ENCODE measurements at regions of chr17 and their contacts with region 1.

Region 1: DNA sequence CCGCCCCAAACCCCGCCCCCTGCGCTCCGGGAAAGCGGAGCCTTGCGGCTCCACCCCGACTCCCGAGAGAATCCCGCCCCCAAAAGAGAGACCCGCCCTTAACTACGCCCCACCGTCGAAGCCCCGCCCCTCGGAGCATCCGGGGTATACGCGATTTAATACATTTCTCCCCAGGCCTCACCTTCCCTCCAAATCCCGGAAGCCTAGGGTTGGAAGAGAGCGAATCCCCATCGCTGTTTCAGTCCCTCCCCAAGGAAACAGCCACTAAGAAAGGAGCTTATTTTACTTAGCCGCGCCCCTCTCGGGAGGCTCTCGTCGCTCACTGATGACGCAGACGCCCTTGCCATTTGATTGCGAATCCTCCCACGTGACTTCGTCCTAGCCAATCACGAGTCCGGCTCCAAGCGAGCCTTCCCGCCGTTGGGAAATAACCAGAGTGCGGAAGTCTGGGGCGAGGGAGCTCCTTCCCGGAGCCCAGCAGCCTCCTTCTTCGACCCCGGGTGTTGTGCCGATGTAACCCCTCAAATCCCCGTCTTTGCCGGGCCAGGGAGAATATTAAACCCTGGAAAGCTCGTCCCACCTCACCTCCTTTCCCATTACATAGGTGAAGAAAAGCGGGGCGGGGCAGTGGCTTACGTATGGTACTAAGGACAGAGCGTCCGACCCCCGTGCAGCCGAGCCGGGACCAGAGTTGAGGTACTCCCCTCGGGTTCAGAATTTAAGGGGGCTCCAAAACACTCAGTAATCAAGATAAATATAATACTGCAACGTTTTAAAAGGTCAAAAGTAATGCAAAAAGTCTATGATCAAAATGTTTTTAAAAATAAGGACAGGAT is 462 bp upstream of the FDXR start:
- DNase-seq: peak; percentile 94
- ATAC-seq: peak; percentile 93
- H3K4me3 Mint-ChIP-seq: peak overlapping the region; percentile 94
- H3K27ac Mint-ChIP-seq: peak overlapping the region; percentile 94
- H3K4me1 Mint-ChIP-seq: peaks cover 22% of the 10 kb centered on the region
- H3K27me3 Mint-ChIP-seq: no peaks in the 10 kb centered on the region
- CTCF ChIP-seq: no peak

Region 2: DNA sequence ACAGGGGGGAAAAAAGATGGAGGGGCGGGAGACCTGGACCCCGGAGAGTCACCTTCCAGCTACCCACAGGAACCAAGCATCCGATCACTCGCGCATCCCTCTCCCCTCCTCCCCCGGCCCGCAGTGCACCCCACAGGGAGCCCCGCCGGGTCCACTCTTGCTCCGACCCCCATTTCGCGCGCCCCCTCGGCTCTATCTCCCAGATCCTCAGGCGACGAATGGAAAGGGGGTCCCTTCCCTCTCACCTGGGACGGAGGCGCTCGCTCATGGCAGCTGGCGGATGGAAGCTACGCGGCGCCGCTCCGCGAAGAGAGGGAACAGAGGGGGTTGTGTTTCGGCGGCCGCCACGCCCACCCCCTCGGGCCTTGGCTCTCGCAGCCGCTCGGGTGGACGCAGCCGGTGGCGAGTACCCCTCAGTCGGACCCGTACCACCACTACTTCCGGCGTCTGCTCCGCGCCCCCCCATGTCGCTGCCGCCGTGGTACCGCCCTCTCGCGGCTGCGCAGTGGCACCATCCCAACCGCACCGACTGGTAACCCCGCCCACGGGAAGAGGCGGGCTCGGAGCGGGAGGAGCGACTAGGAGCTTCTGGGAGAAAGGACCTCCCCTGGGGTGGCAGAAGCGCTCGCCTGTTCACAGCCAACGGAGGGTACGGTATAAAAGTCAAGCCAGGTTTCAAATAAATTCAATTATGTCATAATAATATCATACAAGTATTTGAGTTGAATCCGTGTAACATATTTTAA is 1641.2 kb before region 1 on chr17:
- CTCF ChIA-PET with region 1: no interaction called
- POLR2A ChIA-PET with region 1: interaction called, 10 read pairs
- intact Hi-C with region 1: no loop called
- DNase-seq: peak; percentile 97
- ATAC-seq: peak; percentile 95
- H3K4me3 Mint-ChIP-seq: peak overlapping the region; percentile 93
- H3K27ac Mint-ChIP-seq: peak overlapping the region; percentile 97
- H3K4me1 Mint-ChIP-seq: peaks cover 54% of the 10 kb centered on the region
- H3K27me3 Mint-ChIP-seq: no peaks in the 10 kb centered on the region
- CTCF ChIP-seq: no peak

Region 3: GRCh38 chr17:74579900-74580299 is 293.4 kb before region 1 on chr17:
- CTCF ChIA-PET with region 1: no interaction called
- POLR2A ChIA-PET with region 1: no interaction called
- intact Hi-C with region 1: no loop called
- DNase-seq: no peak
- ATAC-seq: no peak
- H3K4me3 Mint-ChIP-seq: no peak overlapping the region
- H3K27ac Mint-ChIP-seq: no peak overlapping the region
- H3K4me1 Mint-ChIP-seq: peaks cover 3% of the 10 kb centered on the region
- H3K27me3 Mint-ChIP-seq: peaks cover 4% of the 10 kb centered on the region
- CTCF ChIP-seq: no peak

Region 4: DNA sequence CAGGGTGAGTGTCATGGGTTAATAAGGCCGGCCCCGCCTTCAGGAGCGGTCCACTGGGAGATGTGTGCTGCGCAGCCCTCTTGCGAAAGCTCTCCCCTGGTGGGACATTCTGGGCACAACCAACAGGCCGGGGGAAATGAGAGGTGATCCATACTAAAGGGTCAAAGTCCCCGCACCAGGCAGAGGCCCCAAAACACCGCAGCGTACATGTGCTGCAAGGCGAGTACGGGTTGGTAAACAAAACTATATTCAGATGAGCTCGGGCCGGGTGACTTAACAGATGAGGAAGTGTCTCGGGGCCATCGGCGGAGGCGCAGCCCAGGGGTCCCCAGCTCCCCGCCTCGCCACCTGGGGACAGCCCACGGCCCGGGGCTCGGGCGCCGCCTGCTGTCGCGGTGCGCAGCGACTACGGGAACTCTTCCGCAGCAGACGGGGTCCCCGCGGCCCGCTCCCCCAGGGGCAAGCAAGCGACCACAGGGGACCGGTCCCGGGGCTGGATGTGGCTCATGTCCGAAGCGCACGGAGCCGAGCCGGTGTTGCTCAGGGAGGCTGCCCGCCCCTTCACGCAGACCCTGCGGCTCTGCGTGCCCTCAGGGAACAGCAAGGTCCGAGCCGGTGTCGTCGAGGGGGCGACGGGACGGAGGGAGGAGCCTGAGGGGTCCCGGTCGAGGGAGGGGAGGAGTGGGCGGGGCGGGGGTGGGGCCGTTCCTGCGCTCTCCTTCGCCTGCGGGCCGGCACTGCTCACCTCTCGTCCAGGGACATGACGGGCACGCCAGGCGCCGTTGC is 136.6 kb before region 1 on chr17 and contains the start of gene RAB37:
- CTCF ChIA-PET with region 1: no interaction called
- POLR2A ChIA-PET with region 1: interaction called, 17 read pairs
- intact Hi-C with region 1: no loop called
- DNase-seq: peak; percentile 74
- ATAC-seq: peak; percentile 73
- H3K4me3 Mint-ChIP-seq: peak within 1 kb of the TSS; percentile 85
- H3K27ac Mint-ChIP-seq: peak within 1 kb of the TSS; percentile 88
- H3K4me1 Mint-ChIP-seq: peaks cover 49% of the 10 kb centered on the region
- H3K27me3 Mint-ChIP-seq: no peaks in the 10 kb centered on the region
- CTCF ChIP-seq: no peak
- total RNA-seq, gene RAB37: 11.0 and 11.1 TPM in 2 replicates

Region 5: DNA sequence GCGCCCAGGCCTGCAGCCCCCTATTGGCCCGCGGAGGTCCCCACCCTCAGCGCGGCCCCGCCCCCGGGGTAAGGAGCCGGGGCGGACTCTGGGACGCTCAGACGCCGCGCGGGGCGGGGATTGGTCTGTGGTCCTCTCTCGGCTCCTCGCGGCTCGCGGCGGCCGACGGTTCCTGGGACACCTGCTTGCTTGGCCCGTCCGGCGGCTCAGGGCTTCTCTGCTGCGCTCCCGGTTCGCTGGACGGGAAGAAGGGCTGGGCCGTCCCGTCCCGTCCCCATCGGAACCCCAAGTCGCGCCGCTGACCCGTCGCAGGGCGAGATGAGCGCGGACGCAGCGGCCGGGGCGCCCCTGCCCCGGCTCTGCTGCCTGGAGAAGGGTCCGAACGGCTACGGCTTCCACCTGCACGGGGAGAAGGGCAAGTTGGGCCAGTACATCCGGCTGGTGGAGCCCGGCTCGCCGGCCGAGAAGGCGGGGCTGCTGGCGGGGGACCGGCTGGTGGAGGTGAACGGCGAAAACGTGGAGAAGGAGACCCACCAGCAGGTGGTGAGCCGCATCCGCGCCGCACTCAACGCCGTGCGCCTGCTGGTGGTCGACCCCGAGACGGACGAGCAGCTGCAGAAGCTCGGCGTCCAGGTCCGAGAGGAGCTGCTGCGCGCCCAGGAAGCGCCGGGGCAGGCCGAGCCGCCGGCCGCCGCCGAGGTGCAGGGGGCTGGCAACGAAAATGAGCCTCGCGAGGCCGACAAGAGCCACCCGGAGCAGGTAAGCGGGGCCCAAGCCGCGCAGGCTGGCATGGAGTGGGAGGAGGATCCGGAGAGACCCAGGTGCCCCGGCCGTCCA is 124.5 kb before region 1 on chr17 and contains the start of gene NHERF1:
- CTCF ChIA-PET with region 1: interaction called, 3 read pairs
- POLR2A ChIA-PET with region 1: interaction called, 5 read pairs
- intact Hi-C with region 1: loop called (anchors 1 kb)
- DNase-seq: peak; percentile 97
- ATAC-seq: peak; percentile 96
- H3K4me3 Mint-ChIP-seq: peak within 1 kb of the TSS; percentile 89
- H3K27ac Mint-ChIP-seq: peak within 1 kb of the TSS; percentile 72
- H3K4me1 Mint-ChIP-seq: peaks cover 64% of the 10 kb centered on the region
- H3K27me3 Mint-ChIP-seq: no peaks in the 10 kb centered on the region
- CTCF ChIP-seq: no peak
- total RNA-seq, gene NHERF1: 33.3 and 34.5 TPM in 2 replicates

Region 6: GRCh38 chr17:74842599-74843351 is 30.5 kb before region 1 on chr17:
- CTCF ChIA-PET with region 1: no interaction called
- POLR2A ChIA-PET with region 1: interaction called, 11 read pairs
- intact Hi-C with region 1: no loop called
- DNase-seq: no peak
- ATAC-seq: peak; percentile 64
- H3K4me3 Mint-ChIP-seq: no peak overlapping the region
- H3K27ac Mint-ChIP-seq: no peak overlapping the region
- H3K4me1 Mint-ChIP-seq: peaks cover 23% of the 10 kb centered on the region
- H3K27me3 Mint-ChIP-seq: peaks cover 21% of the 10 kb centered on the region
- CTCF ChIP-seq: no peak

Region 7: DNA sequence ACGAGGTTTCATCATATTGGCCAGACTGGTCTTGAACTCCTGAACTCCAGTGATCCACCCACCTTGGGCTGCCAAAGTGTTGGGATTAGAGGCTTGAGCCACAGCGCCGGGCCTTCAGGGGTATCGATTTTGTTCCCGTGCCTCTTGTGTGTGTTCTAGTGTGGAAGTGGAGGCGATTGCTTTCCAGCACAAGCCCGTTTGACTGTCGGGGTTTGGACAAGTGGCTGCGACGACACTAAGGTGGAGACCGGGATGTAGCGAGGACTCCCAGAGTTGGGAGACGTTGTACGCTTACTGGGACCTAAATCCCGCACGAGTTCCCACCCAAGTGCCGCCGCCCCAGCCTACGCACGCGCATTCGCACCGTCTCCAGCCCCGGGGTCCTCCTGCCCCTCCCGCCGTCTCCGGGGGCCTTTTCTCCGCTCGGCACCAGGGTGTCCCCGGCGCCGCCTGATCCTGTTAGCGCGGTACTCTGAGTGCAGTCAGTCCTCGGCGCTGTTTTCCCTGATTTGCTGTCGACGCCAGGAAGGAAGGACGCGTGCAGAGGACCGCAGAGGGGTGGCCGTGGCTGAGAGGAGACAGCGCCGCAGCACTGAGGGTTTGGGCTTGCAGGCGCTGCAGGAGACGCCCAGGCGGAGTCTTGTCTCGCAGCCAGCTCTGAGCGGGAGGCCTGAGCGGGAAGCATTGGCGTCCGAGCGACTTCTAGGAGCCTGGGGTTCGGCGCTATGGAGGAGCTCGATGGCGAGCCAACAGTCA is 332.0 kb after region 1 on chr17 and contains the start of gene NUP85:
- CTCF ChIA-PET with region 1: no interaction called
- POLR2A ChIA-PET with region 1: no interaction called
- intact Hi-C with region 1: loop called (anchors 1 kb)
- DNase-seq: peak; percentile 90
- ATAC-seq: peak; percentile 91
- H3K4me3 Mint-ChIP-seq: peak within 1 kb of the TSS; percentile 96
- H3K27ac Mint-ChIP-seq: peak within 1 kb of the TSS; percentile 99
- H3K4me1 Mint-ChIP-seq: peaks cover 22% of the 10 kb centered on the region
- H3K27me3 Mint-ChIP-seq: no peaks in the 10 kb centered on the region
- CTCF ChIP-seq: no peak
- total RNA-seq, gene NUP85: 103 and 107 TPM in 2 replicates

Region 8: DNA sequence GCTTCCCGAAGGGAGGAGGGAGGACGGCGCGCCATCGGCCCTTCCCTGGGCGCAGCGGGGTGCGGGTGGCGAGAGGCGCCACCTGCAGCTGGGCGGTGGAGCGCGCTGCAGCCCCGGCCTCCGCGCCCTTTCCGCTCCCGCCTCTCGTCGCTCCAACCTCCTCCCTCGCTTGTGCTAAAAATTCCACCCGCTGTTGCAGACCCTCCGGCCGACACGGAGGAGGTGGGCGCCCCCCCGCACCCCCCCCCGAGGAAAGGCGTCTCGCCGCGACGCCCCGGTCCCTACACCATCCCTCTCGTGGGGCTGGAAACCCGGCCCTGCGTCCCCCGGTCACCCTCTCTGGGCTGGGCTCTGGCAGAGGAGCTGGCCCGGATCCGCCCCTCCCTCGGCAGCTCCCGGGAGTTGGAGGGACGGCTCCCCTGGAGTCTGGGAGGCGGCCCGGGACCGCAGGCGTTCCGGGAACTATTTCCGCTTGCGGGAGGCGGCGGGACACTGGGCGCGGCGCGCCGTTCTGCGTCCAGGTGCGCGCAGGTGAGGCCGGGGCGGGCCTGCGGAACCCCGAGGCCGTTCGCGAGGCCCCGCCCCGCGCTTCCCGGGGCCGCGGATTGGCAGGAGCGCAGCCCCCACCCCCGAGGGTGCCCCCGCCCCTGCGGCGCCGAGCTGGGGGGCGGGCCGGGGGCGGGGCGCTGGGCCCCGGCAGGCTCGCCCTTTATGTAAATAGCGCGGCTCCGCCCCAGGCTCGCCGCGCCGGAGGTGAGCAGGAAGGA is 651.9 kb after region 1 on chr17 and contains the start of gene LLGL2:
- CTCF ChIA-PET with region 1: no interaction called
- POLR2A ChIA-PET with region 1: no interaction called
- intact Hi-C with region 1: loop called (anchors 1 kb)
- DNase-seq: peak; percentile 88
- ATAC-seq: peak; percentile 94
- H3K4me3 Mint-ChIP-seq: peak within 1 kb of the TSS; percentile 77
- H3K27ac Mint-ChIP-seq: peak within 1 kb of the TSS; percentile 18
- H3K4me1 Mint-ChIP-seq: peaks cover 10% of the 10 kb centered on the region
- H3K27me3 Mint-ChIP-seq: no peaks in the 10 kb centered on the region
- CTCF ChIP-seq: no peak
- total RNA-seq, gene LLGL2: 27.5 and 29.9 TPM in 2 replicates